ENCODE measurements at regions of chr14 and their contacts with region 1.

Region 1: GRCh38 chr14:31357279-31357678 is 63.1 kb downstream of the HEATR5A start:
- DNase-seq: no peak
- H3K4me3 ChIP-seq: no peak overlapping the region
- H3K27ac ChIP-seq: no peak overlapping the region
- H3K4me1 ChIP-seq: no peaks in the 10 kb centered on the region
- H3K27me3 ChIP-seq: no peaks in the 10 kb centered on the region
- CTCF ChIP-seq: no peak

Region 2: GRCh38 chr14:31127690-31128089 is 229.6 kb before region 1 on chr14:
- intact Hi-C with region 1: loop called (anchors 10 kb)
- DNase-seq: no peak
- H3K4me3 ChIP-seq: no peak overlapping the region
- H3K27ac ChIP-seq: no peak overlapping the region
- H3K4me1 ChIP-seq: no peaks in the 10 kb centered on the region
- H3K27me3 ChIP-seq: no peaks in the 10 kb centered on the region
- CTCF ChIP-seq: no peak

Region 3: DNA sequence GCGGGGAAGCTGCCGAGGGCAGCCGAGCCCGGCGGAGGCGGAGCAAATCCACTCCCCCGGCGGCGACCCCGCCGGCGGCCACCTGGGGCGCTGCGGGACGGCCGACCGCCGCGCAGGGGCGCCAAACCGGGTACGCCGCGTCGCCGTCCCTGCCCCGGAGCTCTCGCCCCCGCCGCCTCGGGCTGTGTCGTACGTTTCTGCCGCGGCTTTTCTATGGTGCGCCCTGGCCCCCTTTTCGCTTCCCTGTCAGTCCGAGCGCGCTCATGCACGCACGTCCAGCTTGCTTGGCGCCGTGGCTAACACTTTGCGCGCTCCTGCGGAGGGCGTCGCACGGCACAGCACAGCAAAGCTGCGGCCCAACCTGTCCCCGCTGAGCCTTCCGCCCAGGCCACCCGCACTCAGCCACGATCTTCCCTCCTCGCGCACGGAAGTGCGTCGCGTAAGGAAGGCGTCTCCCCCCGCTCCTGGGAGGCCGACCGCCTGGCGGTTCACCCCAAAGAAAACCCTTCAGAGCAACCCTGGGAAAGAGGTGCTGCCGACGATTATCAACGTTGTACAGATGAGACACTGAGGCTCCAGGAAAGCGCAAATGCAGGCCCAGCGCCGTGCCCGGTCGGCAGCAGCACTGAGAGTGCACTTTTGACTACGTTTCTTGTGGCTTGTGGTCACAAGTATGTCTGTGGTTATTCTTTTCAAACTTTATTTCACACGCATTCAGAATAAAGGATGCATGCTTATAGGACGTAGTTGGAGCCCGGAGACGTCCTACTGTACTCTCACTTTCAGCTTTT is 149.3 kb before region 1 on chr14 and contains the start of gene HECTD1:
- intact Hi-C with region 1: loop called (anchors 10 kb)
- DNase-seq: peak; percentile 75
- H3K4me3 ChIP-seq: peak within 1 kb of the TSS; percentile 55
- H3K27ac ChIP-seq: peak within 1 kb of the TSS; percentile 96
- H3K4me1 ChIP-seq: no peaks in the 10 kb centered on the region
- H3K27me3 ChIP-seq: no peaks in the 10 kb centered on the region
- CTCF ChIP-seq: peak; percentile 85
- total RNA-seq, gene HECTD1: 113 to 148 TPM

Measured in colonic mucosa (tissue), 4 donors.